ENCODE measurements at regions of chr6 and their contacts with region 1.

Region 1: GRCh38 chr6:5125152-5126006 is 40.2 kb downstream of the PPP1R3G start:
- DNase-seq: no peak
- ATAC-seq: no peak
- H3K4me3 ChIP-seq: no peak overlapping the region
- H3K27ac ChIP-seq: no peak overlapping the region
- H3K4me1 ChIP-seq: peaks cover 0 to 21% (median 0%) of the 10 kb centered on the region in 12 donors
- H3K27me3 ChIP-seq: no peaks in the 10 kb centered on the region
- CTCF ChIP-seq: no peak
- POLR2A ChIP-seq: no peak

Region 2: DNA sequence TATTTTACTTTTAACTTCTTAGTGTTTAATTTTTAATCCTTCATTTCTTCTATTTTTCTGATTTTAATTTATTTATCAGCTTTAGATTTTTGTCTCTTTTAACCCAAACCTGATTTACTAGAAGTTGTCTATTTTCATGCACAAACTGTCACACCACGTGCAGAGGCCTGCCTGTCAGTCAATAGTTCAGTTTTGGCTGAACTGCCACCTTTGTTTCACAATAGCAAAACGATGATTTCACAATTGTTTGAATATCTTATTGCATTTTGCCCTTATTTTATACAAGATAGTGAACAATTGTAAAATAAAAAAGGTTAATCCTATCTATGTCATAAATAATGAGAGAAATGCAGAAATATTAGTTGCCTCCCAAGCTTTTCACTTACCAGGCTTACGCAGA is 64.2 kb before region 1 on chr6:
- intact Hi-C with region 1: loop called in 2 of 10 experiments (anchors 1 to 5 kb)
- DNase-seq: no peak
- ATAC-seq: no peak
- H3K4me3 ChIP-seq: no peak overlapping the region
- H3K27ac ChIP-seq: no peak overlapping the region
- H3K4me1 ChIP-seq: no peaks in the 10 kb centered on the region
- H3K27me3 ChIP-seq: no peaks in the 10 kb centered on the region
- CTCF ChIP-seq: no peak
- POLR2A ChIP-seq: no peak

Region 3: DNA sequence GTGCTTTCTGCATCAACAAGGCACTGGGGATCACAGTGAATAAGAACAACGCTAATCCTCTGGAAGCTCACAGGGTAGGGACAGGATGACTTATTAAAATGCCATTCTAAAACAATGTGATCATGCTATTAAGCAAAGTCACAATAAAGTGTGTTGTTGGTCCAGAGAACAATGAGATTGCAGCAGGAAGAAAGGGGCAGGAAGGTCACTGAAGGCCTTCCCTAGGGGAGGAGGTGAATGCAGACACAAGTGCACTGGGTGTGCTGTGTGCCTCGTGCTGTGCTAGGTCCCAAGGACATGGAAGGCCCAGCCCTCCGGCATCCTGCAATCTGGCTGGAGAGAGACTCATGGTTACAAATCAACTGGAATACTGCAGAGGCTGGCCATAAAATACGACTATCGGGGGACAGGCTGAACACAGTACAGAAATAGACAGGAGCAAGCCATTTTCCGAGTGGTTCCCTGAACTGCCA is 79.7 kb after region 1 on chr6:
- intact Hi-C with region 1: no loop called
- DNase-seq: peak in 2 of 5 donors; percentile 16 to 32
- ATAC-seq: peak in 3 of 4 donors; percentile 16 to 57 (median 20)
- H3K4me3 ChIP-seq: no peak overlapping the region
- H3K27ac ChIP-seq: peak overlapping the region; percentile 59 to 93 (median 82)
- H3K4me1 ChIP-seq: peaks cover 17 to 82% (median 57%) of the 10 kb centered on the region in 12 donors
- H3K27me3 ChIP-seq: no peaks in the 10 kb centered on the region
- CTCF ChIP-seq: no peak
- POLR2A ChIP-seq: no peak